Colonic mucosa (tissue), 4 donors: ENCODE measurements at regions of chr9 and their contacts with region 1.

Region 1: DNA sequence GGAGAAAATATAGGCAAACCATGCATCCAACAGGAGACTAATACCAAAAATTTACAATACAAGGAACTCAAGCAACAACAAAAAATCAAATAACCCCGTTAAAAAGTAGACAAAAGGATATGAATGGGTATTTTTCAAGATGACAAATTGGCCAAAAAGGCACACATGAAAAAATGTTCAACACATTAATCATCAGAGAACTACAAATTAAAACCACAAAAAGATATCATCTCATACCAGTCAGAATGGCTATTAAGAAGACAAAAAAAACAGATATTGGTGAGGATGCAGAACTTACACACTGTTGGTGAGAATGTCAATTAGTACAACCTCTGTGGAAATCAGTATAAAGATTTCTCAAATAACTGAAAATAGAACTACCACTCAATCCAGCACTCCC is 35.0 kb downstream of the TEX10 start:
- DNase-seq: no peak
- H3K4me3 ChIP-seq: no peak overlapping the region
- H3K27ac ChIP-seq: no peak overlapping the region
- H3K4me1 ChIP-seq: no peaks in the 10 kb centered on the region
- H3K27me3 ChIP-seq: no peaks in the 10 kb centered on the region
- CTCF ChIP-seq: no peak

Region 2: GRCh38 chr9:99162759-99163364 is 1154.8 kb before region 1 on chr9:
- intact Hi-C with region 1: loop called (anchors 5 kb)
- DNase-seq: no peak
- H3K4me3 ChIP-seq: no peak overlapping the region
- H3K27ac ChIP-seq: no peak overlapping the region
- H3K4me1 ChIP-seq: no peaks in the 10 kb centered on the region
- H3K27me3 ChIP-seq: no peaks in the 10 kb centered on the region
- CTCF ChIP-seq: peak; percentile 32

Region 3: GRCh38 chr9:99966720-99967119 is 351.0 kb before region 1 on chr9:
- intact Hi-C with region 1: loop called (anchors 10 kb)
- DNase-seq: no peak
- H3K4me3 ChIP-seq: no peak overlapping the region
- H3K27ac ChIP-seq: no peak overlapping the region
- H3K4me1 ChIP-seq: no peaks in the 10 kb centered on the region
- H3K27me3 ChIP-seq: no peaks in the 10 kb centered on the region
- CTCF ChIP-seq: no peak

Region 4: DNA sequence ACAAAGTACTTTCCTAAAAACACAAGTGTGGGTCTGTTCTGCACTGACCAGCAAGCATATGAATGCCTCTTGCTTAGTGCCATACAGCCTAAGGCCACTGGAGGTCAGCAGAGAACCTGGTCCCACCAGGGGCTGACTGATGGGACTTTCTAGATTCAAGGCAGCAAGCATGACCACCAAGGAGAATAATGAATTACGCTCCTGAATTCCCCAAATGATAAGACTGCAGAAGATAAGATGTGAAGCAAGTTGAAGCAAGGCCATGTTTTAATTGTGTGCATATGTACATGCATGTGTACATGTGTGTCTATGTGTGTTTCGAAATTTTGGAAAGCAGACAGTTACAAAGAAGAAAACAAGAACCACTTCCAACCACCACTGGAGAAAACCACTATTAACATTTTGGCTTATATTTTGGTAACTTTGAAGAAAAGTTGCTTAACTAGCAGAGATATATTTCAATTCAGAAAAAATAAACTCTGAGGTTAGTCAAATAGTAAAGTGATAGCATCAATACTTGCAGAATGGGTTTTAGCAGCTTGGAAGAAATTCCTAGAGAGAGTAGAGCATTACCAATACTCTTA is 289.4 kb before region 1 on chr9:
- intact Hi-C with region 1: loop called (anchors 10 kb)
- DNase-seq: peak; percentile 72
- H3K4me3 ChIP-seq: no peak overlapping the region
- H3K27ac ChIP-seq: no peak overlapping the region
- H3K4me1 ChIP-seq: no peaks in the 10 kb centered on the region
- H3K27me3 ChIP-seq: no peaks in the 10 kb centered on the region
- CTCF ChIP-seq: peak; percentile 93